ENCODE measurements at regions of chr9 and their contacts with region 1.

Region 1: DNA sequence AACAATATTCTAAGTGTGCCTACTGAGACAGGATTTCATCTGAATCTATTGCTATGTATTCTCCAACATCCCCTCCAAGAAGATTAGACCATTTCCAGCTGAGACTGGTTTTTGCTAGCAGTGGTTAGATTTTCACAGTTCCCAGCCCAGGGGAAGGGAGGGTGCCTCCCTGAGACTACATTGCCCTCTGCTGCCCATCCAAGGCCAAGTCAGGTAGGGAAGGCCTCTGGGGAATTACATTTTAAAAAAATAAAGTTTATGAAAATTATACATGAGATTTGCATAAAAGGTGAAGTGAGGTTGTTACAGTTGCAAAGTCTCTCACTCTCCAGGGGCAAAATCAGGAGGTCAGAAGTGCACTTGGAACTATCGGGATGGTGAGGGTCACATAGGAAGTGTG is 28.0 kb upstream of the SYK start:
- DNase-seq: no peak
- ATAC-seq: peak; percentile 43
- H3K4me3 ChIP-seq: no peak overlapping the region
- H3K27ac ChIP-seq: no peak overlapping the region
- H3K4me1 ChIP-seq: peaks cover 39% of the 10 kb centered on the region
- H3K27me3 ChIP-seq: no peaks in the 10 kb centered on the region
- CTCF ChIP-seq: peak; percentile 39 to 44 (median 42); a peak in 5 of 6 replicates
- EP300 ChIP-seq: no peak
- POLR2A ChIP-seq: no peak
- RAD21 ChIP-seq: peak; percentile 59

Region 2: GRCh38 chr9:90801583-90802289 is 28.1 kb after region 1 on chr9 and contains the start of gene SYK:
- CTCF ChIA-PET with region 1: no interaction called
- POLR2A ChIA-PET with region 1: no interaction called
- RAD21 ChIA-PET with region 1: no interaction called
- SMC1A ChIA-PET with region 1: no interaction called
- in situ Hi-C with region 1: no loop called
- intact Hi-C with region 1: loop called (anchors 2 kb)
- DNase-seq: no peak
- ATAC-seq: peak; percentile 72
- H3K4me3 ChIP-seq: peak within 1 kb of the TSS; percentile 81
- H3K27ac ChIP-seq: peak within 1 kb of the TSS; percentile 83
- H3K4me1 ChIP-seq: peaks cover 25% of the 10 kb centered on the region
- H3K27me3 ChIP-seq: no peaks in the 10 kb centered on the region
- CTCF ChIP-seq: no peak
- EP300 ChIP-seq: no peak
- POLR2A ChIP-seq: peak; percentile 66; the same call in 1 of the 2 replicates
- RAD21 ChIP-seq: no peak
- polyA plus RNA-seq, gene SYK: 23.1 to 24.8 TPM

Region 3: GRCh38 chr9:90838100-90838499 is 64.5 kb after region 1 on chr9:
- CTCF ChIA-PET with region 1: interaction called, 3 read pairs
- POLR2A ChIA-PET with region 1: no interaction called
- RAD21 ChIA-PET with region 1: no interaction called
- SMC1A ChIA-PET with region 1: interaction called, 4 read pairs
- in situ Hi-C with region 1: no loop called
- intact Hi-C with region 1: loop called (anchors 5 kb)
- DNase-seq: no peak
- ATAC-seq: peak; percentile 48
- H3K4me3 ChIP-seq: no peak overlapping the region
- H3K27ac ChIP-seq: no peak overlapping the region
- H3K4me1 ChIP-seq: peaks cover 25% of the 10 kb centered on the region
- H3K27me3 ChIP-seq: no peaks in the 10 kb centered on the region
- CTCF ChIP-seq: peak in 2 of 3 experiments; percentile 8; a peak in 1 of 6 replicates
- EP300 ChIP-seq: no peak
- POLR2A ChIP-seq: no peak
- RAD21 ChIP-seq: peak; percentile 40; the same call in 1 of the 2 replicates

Region 4: GRCh38 chr9:90870621-90871326 is 97.2 kb after region 1 on chr9:
- CTCF ChIA-PET with region 1: interaction called, 6 read pairs
- POLR2A ChIA-PET with region 1: no interaction called
- RAD21 ChIA-PET with region 1: interaction called, 8 read pairs
- SMC1A ChIA-PET with region 1: interaction called, 3 read pairs
- in situ Hi-C with region 1: no loop called
- intact Hi-C with region 1: loop called (anchors 1 kb)
- DNase-seq: peak; percentile 17
- ATAC-seq: peak; percentile 81
- H3K4me3 ChIP-seq: no peak overlapping the region
- H3K27ac ChIP-seq: no peak overlapping the region
- H3K4me1 ChIP-seq: no peaks in the 10 kb centered on the region
- H3K27me3 ChIP-seq: no peaks in the 10 kb centered on the region
- CTCF ChIP-seq: peak; percentile 84 to 89 (median 85)
- EP300 ChIP-seq: no peak
- POLR2A ChIP-seq: no peak
- RAD21 ChIP-seq: peak; percentile 95

Region 5: GRCh38 chr9:91245431-91246313 is 472.1 kb after region 1 on chr9:
- CTCF ChIA-PET with region 1: no interaction called
- POLR2A ChIA-PET with region 1: no interaction called
- RAD21 ChIA-PET with region 1: no interaction called
- SMC1A ChIA-PET with region 1: no interaction called
- in situ Hi-C with region 1: no loop called
- intact Hi-C with region 1: no loop called
- DNase-seq: no peak
- ATAC-seq: peak; percentile 55
- H3K4me3 ChIP-seq: no peak overlapping the region
- H3K27ac ChIP-seq: no peak overlapping the region
- H3K4me1 ChIP-seq: no peaks in the 10 kb centered on the region
- H3K27me3 ChIP-seq: no peaks in the 10 kb centered on the region
- CTCF ChIP-seq: no peak
- EP300 ChIP-seq: no peak
- POLR2A ChIP-seq: no peak
- RAD21 ChIP-seq: no peak